Posterior vena cava (tissue), 2 donors: ENCODE measurements at regions of chr12 and their contacts with region 1.

Region 1: DNA sequence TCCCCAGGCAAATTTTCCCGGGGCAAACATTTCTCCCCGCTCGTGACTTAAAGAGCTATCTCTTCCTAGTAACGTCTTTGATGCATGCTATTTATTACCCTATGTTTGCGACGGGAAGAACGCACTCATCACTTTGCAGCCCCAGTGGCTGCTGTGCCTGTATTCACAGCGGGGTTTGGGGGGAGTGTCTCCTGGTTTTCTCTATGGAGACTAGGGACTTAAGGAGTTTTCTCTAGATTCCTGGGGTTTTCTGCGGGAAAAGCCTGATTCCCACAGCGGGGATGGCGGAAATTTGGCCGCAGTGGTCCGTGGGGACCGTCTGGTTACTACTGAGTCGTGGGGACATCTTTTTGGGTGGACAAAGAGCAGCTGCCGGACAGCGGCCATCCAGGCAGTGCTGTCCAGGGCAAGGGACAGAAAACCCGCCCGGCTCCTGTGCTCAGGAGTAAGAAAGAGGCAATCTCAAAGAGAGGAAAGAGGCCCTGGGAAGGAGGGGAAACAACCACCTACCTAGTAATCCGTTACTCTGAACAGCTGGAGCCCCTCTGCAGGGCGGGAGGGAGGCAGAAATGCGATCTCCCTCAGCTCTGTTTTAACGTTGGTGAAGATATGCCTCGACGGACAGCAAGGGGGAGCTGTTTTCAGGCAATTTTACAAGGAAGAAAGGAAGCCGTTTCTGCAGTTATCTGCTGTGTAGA is 771 bp upstream of the AVPR1A start:
- DNase-seq: no peak

Region 2: DNA sequence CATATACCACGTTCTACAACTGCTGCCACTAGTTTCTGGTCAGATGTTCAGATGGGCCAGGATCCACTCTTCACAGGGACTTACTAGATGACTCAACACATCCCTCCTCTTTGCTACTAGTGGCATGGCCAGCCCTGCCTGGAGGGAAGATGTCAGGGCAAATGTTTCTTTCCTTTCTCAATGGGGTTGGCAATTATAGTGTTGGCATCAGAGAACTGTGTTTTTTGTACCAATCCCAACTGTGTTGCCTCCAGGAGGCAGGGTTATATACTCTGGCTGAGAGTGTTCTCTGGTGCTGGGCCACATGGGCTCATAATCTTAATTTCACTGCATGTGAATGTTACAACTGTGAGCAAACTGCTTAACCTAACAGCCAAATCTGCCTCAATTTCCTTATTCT is 69.1 kb after region 1 on chr12:
- intact Hi-C with region 1: loop called in 1 of 2 experiments (anchors 2 kb)
- DNase-seq: no peak